Activated naive CD4-positive, alpha-beta T cell treated with anti-CD3 and anti-CD28 coated beads for 36 hours (primary cell): ENCODE measurements at regions of chr19 and their contacts with region 1.

Region 1: GRCh38 chr19:57578487-57579205 is at the start of gene ZNF416:
- DNase-seq: peak; percentile 98
- H3K4me3 Mint-ChIP-seq: peak within 1 kb of the TSS; percentile 75
- H3K27ac Mint-ChIP-seq: peak within 1 kb of the TSS; percentile 84
- H3K4me1 Mint-ChIP-seq: peaks cover 22% of the 10 kb centered on the region
- H3K27me3 Mint-ChIP-seq: no peaks in the 10 kb centered on the region
- total RNA-seq, gene ZNF416: 1.5 to 2.0 TPM

Region 2: DNA sequence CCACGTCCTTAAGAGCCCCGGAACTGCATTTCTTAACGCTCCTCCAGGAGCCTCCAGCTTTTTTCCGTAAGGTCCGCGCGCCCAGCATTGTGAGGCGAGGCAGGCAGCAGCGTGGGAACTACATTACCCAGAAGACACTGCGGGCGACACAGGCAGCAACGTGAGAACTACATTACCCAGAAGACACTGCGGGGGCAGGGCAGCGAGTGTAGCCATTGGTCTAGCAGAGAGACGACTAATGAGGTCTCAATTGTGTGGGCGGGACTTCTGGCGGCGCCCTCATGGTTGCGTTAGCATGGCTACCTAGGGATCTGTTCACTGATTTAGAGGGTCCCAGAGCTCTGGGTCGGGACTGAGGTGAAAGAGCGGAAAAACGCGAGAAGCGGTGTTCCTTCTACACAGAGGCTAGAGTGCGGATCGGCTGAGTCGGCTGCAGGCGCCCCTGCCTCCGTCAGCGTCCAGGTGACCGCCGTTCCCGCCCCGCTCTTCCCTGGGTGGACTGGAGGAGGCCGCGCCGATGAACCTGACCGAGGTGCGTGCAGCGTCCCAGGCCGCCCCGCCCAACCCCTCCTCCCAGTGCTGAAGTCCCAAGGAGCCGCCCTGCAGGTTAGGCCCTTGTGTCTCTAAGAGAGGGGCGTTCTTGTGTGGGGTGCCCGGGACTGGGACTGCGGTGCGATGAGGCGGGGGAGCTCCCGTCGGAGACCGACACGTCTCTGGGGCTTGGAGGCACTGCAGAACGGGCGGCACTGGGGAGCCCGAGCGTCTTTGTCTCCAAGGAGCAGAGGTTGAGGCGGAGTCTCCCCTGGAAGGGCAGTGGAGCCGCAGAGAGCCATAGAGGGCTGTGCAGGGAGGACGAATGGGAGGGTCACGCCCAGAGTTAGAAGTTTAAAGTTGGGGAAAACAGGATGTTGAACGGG is 143.3 kb before region 1 on chr19 and contains the start of gene ZNF749:
- CTCF ChIA-PET with region 1: no interaction called
- intact Hi-C with region 1: loop called (anchors 1 kb)
- DNase-seq: peak; percentile 98
- H3K4me3 Mint-ChIP-seq: peak within 1 kb of the TSS; percentile 93
- H3K27ac Mint-ChIP-seq: peak within 1 kb of the TSS; percentile 70
- H3K4me1 Mint-ChIP-seq: peaks cover 26% of the 10 kb centered on the region
- H3K27me3 Mint-ChIP-seq: no peaks in the 10 kb centered on the region
- total RNA-seq, gene ZNF749: 8.2 to 9.9 TPM

Region 3: DNA sequence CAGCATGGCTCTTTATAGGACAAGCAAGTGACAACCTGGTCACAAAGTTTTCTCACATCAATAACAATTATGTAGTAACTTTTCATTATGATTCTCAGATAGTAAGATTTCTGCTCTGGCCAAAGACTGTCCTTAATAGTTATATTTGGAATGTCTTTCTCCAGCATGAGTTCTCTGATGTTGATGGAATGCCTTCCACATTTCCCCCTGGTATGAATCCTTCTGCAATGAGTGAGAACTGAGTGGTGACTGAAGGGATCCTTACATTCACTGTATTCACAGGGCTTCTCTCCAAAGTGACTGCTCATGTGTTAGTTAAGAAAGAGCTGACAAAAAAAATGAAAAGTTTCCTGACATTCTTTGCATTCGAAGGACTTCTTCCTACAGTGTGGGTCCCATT is 32.1 kb before region 1 on chr19:
- CTCF ChIA-PET with region 1: no interaction called
- intact Hi-C with region 1: no loop called
- DNase-seq: no peak
- H3K4me3 Mint-ChIP-seq: no peak overlapping the region
- H3K27ac Mint-ChIP-seq: no peak overlapping the region
- H3K4me1 Mint-ChIP-seq: no peaks in the 10 kb centered on the region
- H3K27me3 Mint-ChIP-seq: no peaks in the 10 kb centered on the region

Region 4: DNA sequence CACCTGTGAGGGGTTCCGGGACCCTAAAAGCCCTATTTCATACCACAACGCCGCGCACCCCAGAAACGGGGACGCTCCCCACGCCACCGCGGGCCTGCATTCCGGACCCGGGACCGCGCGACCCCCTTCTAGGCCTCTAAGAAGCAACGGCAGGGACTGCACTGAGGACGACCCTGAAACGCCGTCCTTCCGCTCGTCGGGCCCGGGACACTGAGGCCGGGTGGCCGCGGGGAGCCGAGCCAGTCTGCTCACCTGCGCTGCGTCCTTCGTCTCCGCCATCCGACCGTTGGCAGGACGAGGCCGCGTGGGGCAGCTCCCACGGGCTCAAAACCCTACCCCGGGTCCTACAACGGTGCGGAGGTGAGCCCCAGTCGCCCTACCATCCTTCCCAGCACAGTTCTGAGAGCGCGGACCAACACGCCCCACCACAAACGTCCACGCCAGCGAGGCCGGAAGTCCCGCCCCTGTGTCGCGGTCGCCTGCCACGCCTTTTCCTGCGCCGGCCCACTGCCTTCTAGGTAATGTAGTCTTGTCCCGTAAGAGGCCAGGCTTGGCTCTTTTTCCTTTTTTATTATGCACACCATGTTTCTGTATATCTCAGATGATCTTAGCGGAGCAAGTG is 19.1 kb before region 1 on chr19 and contains the start of gene ZNF550:
- CTCF ChIA-PET with region 1: no interaction called
- intact Hi-C with region 1: loop called (anchors 2 kb)
- DNase-seq: peak; percentile 86
- H3K4me3 Mint-ChIP-seq: peak within 1 kb of the TSS; percentile 96
- H3K27ac Mint-ChIP-seq: peak within 1 kb of the TSS; percentile 84
- H3K4me1 Mint-ChIP-seq: peaks cover 25% of the 10 kb centered on the region
- H3K27me3 Mint-ChIP-seq: no peaks in the 10 kb centered on the region
- total RNA-seq, gene ZNF550: 6.6 to 9.3 TPM

Region 5: GRCh38 chr19:57599761-57600383 is 21.2 kb after region 1 on chr19 and contains the start of gene ZNF530:
- CTCF ChIA-PET with region 1: no interaction called
- intact Hi-C with region 1: loop called (anchors 1 kb)
- DNase-seq: peak; percentile 95
- H3K4me3 Mint-ChIP-seq: peak within 1 kb of the TSS; percentile 82
- H3K27ac Mint-ChIP-seq: peak within 1 kb of the TSS; percentile 42
- H3K4me1 Mint-ChIP-seq: peaks cover 16% of the 10 kb centered on the region
- H3K27me3 Mint-ChIP-seq: no peaks in the 10 kb centered on the region
- total RNA-seq, gene ZNF530: 4.0 to 4.4 TPM

Region 6: GRCh38 chr19:57613941-57614743 is 35.5 kb after region 1 on chr19 and contains the start of gene ZNF134:
- CTCF ChIA-PET with region 1: no interaction called
- intact Hi-C with region 1: loop called (anchors 2 kb)
- DNase-seq: peak; percentile 92
- H3K4me3 Mint-ChIP-seq: peak within 1 kb of the TSS; percentile 92
- H3K27ac Mint-ChIP-seq: peak within 1 kb of the TSS; percentile 57
- H3K4me1 Mint-ChIP-seq: peaks cover 24% of the 10 kb centered on the region
- H3K27me3 Mint-ChIP-seq: no peaks in the 10 kb centered on the region
- total RNA-seq, gene ZNF134: 6.9 to 7.0 TPM

Region 7: GRCh38 chr19:57632987-57633831 is 54.6 kb after region 1 on chr19 and contains the start of gene ZNF211:
- CTCF ChIA-PET with region 1: no interaction called
- intact Hi-C with region 1: loop called (anchors 2 kb)
- DNase-seq: peak; percentile 91
- H3K4me3 Mint-ChIP-seq: peak within 1 kb of the TSS; percentile 87
- H3K27ac Mint-ChIP-seq: peak within 1 kb of the TSS; percentile 72
- H3K4me1 Mint-ChIP-seq: peaks cover 18% of the 10 kb centered on the region
- H3K27me3 Mint-ChIP-seq: no peaks in the 10 kb centered on the region
- total RNA-seq, gene ZNF211: 5.2 to 5.7 TPM

Region 8: DNA sequence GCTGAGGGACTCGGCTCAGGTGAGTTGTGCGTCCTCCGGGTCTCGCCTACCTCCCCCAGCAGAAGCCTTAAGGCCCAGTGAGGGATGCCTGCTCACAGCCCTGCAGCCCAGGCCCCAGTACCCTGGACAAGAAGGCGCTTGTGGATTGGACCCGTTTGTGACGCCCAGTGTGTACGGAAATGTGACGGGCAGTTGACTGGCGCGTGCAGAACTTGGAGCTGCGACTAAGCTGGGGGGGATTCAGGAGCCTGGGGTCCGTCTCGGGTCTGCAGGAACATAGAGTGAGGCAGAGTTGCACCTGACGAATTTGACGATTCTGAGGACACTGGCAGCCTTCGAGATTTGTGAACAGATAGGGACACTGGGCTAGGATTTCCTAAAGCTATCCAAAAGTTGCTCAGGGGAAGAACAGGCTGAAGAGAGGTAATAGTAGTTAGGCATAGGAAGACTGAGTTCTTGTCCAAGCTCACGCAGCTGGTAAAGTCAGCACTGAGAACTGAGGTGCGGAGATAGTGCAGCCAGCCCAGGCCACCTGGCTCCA is 103.7 kb after region 1 on chr19:
- CTCF ChIA-PET with region 1: no interaction called
- intact Hi-C with region 1: loop called (anchors 5 kb)
- DNase-seq: no peak
- H3K4me3 Mint-ChIP-seq: peak overlapping the region; percentile 94
- H3K27ac Mint-ChIP-seq: peak overlapping the region; percentile 84
- H3K4me1 Mint-ChIP-seq: peaks cover 32% of the 10 kb centered on the region
- H3K27me3 Mint-ChIP-seq: no peaks in the 10 kb centered on the region

Region 9: GRCh38 chr19:58166708-58167280 is 588.1 kb after region 1 on chr19:
- CTCF ChIA-PET with region 1: no interaction called
- intact Hi-C with region 1: no loop called
- DNase-seq: no peak
- H3K4me3 Mint-ChIP-seq: no peak overlapping the region
- H3K27ac Mint-ChIP-seq: no peak overlapping the region
- H3K4me1 Mint-ChIP-seq: no peaks in the 10 kb centered on the region
- H3K27me3 Mint-ChIP-seq: no peaks in the 10 kb centered on the region